ENCODE measurements at regions of chr1 and their contacts with region 1.

Region 1: GRCh38 chr1:115239148-115239820 is 98.8 kb downstream of the NGF start:
- DNase-seq: peak; percentile 90
- H3K4me3 ChIP-seq: peak overlapping the region; percentile 24
- CTCF ChIP-seq: no peak

Region 2: DNA sequence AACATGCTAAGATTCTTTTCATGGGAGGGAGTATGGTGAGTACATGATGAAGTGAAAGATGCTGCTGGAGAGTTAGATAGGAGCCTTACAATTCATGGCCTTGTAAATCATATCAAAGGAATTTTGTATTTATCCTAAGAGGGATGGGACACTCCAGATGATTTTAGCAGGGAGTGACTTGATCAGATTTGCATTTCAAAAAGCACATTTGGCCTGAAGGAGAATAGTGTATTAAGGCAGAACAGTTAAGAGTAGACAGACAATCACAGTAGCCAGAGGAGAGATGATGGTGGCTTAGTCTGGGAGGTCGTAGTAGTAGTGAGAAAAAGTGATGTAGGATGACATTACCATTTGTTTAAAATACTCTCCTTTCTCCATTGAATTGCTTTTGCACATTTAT is 335.8 kb before region 1 on chr1:
- CTCF ChIA-PET with region 1: no interaction called
- POLR2A ChIA-PET with region 1: no interaction called
- DNase-seq: no peak
- H3K4me3 ChIP-seq: no peak overlapping the region
- CTCF ChIP-seq: no peak

Region 3: GRCh38 chr1:115021154-115021553 is 218.1 kb before region 1 on chr1:
- CTCF ChIA-PET with region 1: no interaction called
- POLR2A ChIA-PET with region 1: no interaction called
- DNase-seq: no peak
- H3K4me3 ChIP-seq: no peak overlapping the region
- CTCF ChIP-seq: no peak

Region 4: GRCh38 chr1:115099693-115100050 is 139.6 kb before region 1 on chr1:
- CTCF ChIA-PET with region 1: no interaction called
- POLR2A ChIA-PET with region 1: no interaction called
- DNase-seq: no peak
- H3K4me3 ChIP-seq: no peak overlapping the region
- CTCF ChIP-seq: no peak

Region 5: GRCh38 chr1:115179397-115179835 is 59.9 kb before region 1 on chr1:
- CTCF ChIA-PET with region 1: no interaction called
- POLR2A ChIA-PET with region 1: interaction called, 10 read pairs
- DNase-seq: peak; percentile 83
- H3K4me3 ChIP-seq: no peak overlapping the region
- CTCF ChIP-seq: no peak

Region 6: GRCh38 chr1:115227346-115228135 is 11.7 kb before region 1 on chr1:
- CTCF ChIA-PET with region 1: interaction called, 20 read pairs
- POLR2A ChIA-PET with region 1: interaction called, 7 read pairs
- DNase-seq: peak; percentile 84
- H3K4me3 ChIP-seq: no peak overlapping the region; the same call in 1 of the 2 replicates
- CTCF ChIP-seq: no peak

Region 7: GRCh38 chr1:115251856-115252255 is 12.6 kb after region 1 on chr1:
- CTCF ChIA-PET with region 1: interaction called, 3 read pairs
- POLR2A ChIA-PET with region 1: interaction called, 11 read pairs
- DNase-seq: peak; percentile 87
- H3K4me3 ChIP-seq: no peak overlapping the region
- CTCF ChIP-seq: no peak

Region 8: DNA sequence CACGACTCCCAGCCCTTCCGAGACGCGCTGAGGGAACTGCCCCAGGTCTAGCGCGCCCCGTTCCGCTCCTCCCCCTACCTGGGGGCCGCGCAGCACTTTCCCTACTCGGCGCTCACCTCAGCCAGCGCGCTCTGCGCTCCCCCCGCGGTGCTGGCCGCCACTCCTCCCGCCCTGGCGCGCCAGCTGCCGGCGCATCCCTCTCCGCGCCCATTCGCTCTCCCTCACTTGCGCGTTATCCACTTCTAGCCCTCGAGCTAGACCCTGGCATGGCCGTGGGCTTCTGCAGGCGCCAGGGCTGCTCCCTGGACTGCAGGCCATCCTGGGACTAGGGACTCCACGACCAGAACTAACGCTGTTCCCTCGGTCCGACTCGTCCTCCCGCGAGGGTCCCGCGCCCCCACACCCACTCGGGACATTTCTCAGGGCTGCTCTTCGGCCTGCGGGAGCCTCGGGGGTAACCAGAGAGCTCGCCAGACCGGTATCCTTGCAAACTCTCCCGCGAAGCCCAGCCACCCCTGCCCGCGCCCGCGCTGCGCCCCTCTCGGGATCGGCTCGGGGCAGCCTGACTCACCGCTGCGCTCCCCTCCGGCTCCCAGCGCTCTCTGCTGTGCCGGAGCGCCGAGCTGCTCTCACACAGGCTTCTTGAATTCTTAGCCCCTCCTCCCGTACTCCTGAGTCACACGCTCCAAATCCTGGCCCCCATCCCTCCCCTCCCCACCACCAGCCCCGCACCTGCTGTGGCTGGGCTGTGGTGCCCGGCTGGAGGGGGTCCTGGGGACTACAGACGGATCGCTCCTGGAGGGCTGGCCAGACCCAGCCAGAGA is 98.6 kb after region 1 on chr1 and contains the start of gene NGF:
- CTCF ChIA-PET with region 1: no interaction called
- POLR2A ChIA-PET with region 1: interaction called, 11 read pairs
- DNase-seq: no peak
- H3K4me3 ChIP-seq: peak within 1 kb of the TSS; percentile 99
- CTCF ChIP-seq: no peak

Measured in AG04449 (cell line).